HepG2 (cell line): ENCODE measurements at regions of chr4 and their contacts with region 1.

Region 1: GRCh38 chr4:6892190-6892908 is 17.3 kb upstream of the TBC1D14 start:
- DNase-seq: peak; percentile 94
- ATAC-seq: peak; percentile 79
- H3K4me3 ChIP-seq: peak overlapping the region; percentile 38 to 69 (median 52); a peak in 5 of 6 replicates
- H3K27ac ChIP-seq: peak overlapping the region; percentile 99
- H3K4me1 ChIP-seq: peaks cover 57% of the 10 kb centered on the region
- H3K27me3 ChIP-seq: no peaks in the 10 kb centered on the region
- CTCF ChIP-seq: peak; percentile 91
- EP300 ChIP-seq: peak in 1 of 2 experiments; percentile 62; a peak in 2 of 4 replicates
- POLR2A ChIP-seq: peak; percentile 57 to 79; a peak in 2 of 4 replicates
- RAD21 ChIP-seq: peak; percentile 90

Region 2: DNA sequence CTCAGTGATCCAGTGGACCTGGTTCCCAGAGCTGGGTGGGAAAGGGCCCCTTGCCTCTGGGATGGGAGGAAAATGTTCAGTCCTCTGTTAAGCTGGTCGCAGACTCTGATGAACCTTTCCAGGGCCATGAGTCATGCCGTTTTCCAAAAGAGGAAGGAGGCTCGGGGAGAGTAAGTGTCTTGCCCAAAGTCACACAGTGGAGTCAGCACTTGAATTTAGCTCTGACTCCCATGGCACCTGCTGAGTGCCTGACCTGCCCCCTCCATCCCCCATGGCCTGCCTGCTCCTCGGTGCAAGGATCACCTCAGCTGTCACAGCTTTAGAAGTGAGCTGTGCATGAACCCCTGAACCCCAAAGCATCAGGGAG is 123.8 kb before region 1 on chr4:
- CTCF ChIA-PET with region 1: no interaction called
- POLR2A ChIA-PET with region 1: interaction called, 21 read pairs
- in situ Hi-C with region 1: no loop called
- intact Hi-C with region 1: no loop called
- DNase-seq: no peak
- ATAC-seq: no peak; the same call in 1 of the 3 replicates
- H3K4me3 ChIP-seq: peak overlapping the region; percentile 5 to 62 (median 34); a peak in 4 of 6 replicates
- H3K27ac ChIP-seq: peak overlapping the region; percentile 18
- H3K4me1 ChIP-seq: peaks cover 82% of the 10 kb centered on the region
- H3K27me3 ChIP-seq: no peaks in the 10 kb centered on the region
- CTCF ChIP-seq: no peak
- EP300 ChIP-seq: no peak
- POLR2A ChIP-seq: no peak
- RAD21 ChIP-seq: no peak

Region 3: GRCh38 chr4:6917461-6918271 is 25.3 kb after region 1 on chr4:
- CTCF ChIA-PET with region 1: interaction called, 6 read pairs
- POLR2A ChIA-PET with region 1: interaction called, 215 read pairs
- in situ Hi-C with region 1: no loop called
- intact Hi-C with region 1: no loop called
- DNase-seq: peak; percentile 95
- ATAC-seq: peak; percentile 93
- H3K4me3 ChIP-seq: peak overlapping the region in 2 of 3 experiments; percentile 2 to 35; a peak in 1 of 6 replicates
- H3K27ac ChIP-seq: peak overlapping the region; percentile 75
- H3K4me1 ChIP-seq: peaks cover 79% of the 10 kb centered on the region
- H3K27me3 ChIP-seq: no peaks in the 10 kb centered on the region
- CTCF ChIP-seq: peak; percentile 74
- EP300 ChIP-seq: peak in 1 of 2 experiments; percentile 71; a peak in 2 of 4 replicates
- POLR2A ChIP-seq: no peak
- RAD21 ChIP-seq: peak; percentile 67

Region 4: DNA sequence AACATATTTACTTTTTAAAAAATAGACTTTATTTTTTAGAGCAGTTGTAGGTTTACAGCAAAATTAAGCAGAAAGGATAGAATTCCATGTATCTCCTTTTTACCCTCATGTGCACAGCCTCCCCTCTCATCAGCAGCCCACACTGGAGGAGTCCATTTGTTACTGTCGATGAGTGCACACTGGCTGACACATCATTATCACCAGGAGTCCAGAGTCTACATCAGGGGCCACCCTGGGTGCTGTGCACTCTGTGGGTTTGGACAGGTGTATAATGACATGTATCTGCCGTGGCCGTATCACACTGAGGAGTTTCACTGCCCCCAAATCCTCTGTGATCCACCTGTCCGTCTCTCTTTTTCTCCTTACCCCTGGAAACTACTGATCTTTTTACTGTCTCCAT is 43.6 kb after region 1 on chr4:
- CTCF ChIA-PET with region 1: no interaction called
- POLR2A ChIA-PET with region 1: interaction called, 16 read pairs
- in situ Hi-C with region 1: no loop called
- intact Hi-C with region 1: no loop called
- DNase-seq: peak; percentile 56
- ATAC-seq: peak; percentile 74
- H3K4me3 ChIP-seq: no peak overlapping the region
- H3K27ac ChIP-seq: peak overlapping the region; percentile 71
- H3K4me1 ChIP-seq: peaks cover 65% of the 10 kb centered on the region
- H3K27me3 ChIP-seq: no peaks in the 10 kb centered on the region
- CTCF ChIP-seq: no peak
- EP300 ChIP-seq: no peak
- POLR2A ChIP-seq: no peak
- RAD21 ChIP-seq: no peak

Region 5: DNA sequence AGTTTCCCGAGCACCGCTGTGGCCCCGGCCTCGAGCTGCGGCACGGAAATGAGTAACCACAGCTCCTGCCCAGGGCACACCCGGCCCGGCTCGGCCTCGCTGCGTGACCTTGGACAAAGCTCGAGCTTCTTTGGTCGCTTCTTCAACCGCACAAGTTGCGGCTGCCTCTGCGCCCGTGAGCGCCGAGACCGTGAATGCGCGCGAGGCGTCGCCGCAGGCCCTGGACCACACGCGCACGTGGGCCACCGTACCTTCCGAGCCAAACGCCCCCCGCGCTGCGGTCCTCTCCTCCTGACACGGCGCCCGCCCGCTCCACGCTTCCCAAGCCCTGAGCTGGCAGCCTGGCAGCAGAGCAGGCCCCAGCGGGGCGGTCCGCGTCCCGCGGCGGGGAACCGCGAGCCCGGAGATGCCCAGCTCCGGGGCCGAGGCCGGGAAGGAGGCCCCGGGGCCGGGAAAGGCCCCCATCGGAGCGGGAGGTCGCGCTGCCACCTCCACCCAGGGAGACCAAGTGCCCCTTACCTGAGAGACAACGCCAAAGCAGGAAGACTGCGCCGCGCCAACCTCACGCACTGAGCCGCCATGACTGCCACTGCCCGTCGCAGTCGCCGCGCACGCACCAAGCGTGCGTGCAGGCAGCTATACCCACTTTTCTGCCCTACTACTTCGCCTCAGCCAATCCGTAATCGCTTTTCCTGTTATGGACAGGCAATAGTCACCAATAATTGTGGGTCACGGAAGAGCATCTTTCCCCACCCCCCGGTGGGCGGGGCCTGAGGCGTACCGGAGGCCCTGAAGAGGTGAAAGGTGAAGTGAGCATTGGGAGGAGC is 175.3 kb after region 1 on chr4 and contains the start of gene GRPEL1:
- CTCF ChIA-PET with region 1: no interaction called
- POLR2A ChIA-PET with region 1: interaction called, 34 read pairs
- in situ Hi-C with region 1: no loop called
- intact Hi-C with region 1: no loop called
- DNase-seq: peak; percentile 99
- ATAC-seq: peak; percentile 94
- H3K4me3 ChIP-seq: peak within 1 kb of the TSS; percentile 79 to 97 (median 85)
- H3K27ac ChIP-seq: peak within 1 kb of the TSS; percentile 91
- H3K4me1 ChIP-seq: peaks cover 60% of the 10 kb centered on the region
- H3K27me3 ChIP-seq: no peaks in the 10 kb centered on the region; a peak in 1 of 5 replicates
- CTCF ChIP-seq: no peak
- EP300 ChIP-seq: 0 out of 4 replicates have a peak, but pooled peaks of 1 of the 2 experiments have one; percentile 13
- POLR2A ChIP-seq: peak in 1 of 2 experiments; percentile 99; a peak in 2 of 4 replicates
- RAD21 ChIP-seq: peak; percentile 19; the same call in 1 of the 2 replicates
- total RNA-seq, gene GRPEL1: 141 and 213 TPM in 2 replicates